SK-N-SH (cell line): ENCODE measurements at regions of chrX and their contacts with region 1.

Region 1: GRCh38 chrX:151151665-151152267 is 24.6 kb upstream of the GPR50 start:
- DNase-seq: peak; percentile 37
- H3K4me3 ChIP-seq: no peak overlapping the region
- H3K27ac ChIP-seq: no peak overlapping the region
- H3K4me1 ChIP-seq: no peaks in the 10 kb centered on the region
- H3K27me3 ChIP-seq: no peaks in the 10 kb centered on the region; the same call in 1 of the 2 replicates
- CTCF ChIP-seq: peak; percentile 88
- EP300 ChIP-seq: no peak
- RAD21 ChIP-seq: peak; percentile 89

Region 2: DNA sequence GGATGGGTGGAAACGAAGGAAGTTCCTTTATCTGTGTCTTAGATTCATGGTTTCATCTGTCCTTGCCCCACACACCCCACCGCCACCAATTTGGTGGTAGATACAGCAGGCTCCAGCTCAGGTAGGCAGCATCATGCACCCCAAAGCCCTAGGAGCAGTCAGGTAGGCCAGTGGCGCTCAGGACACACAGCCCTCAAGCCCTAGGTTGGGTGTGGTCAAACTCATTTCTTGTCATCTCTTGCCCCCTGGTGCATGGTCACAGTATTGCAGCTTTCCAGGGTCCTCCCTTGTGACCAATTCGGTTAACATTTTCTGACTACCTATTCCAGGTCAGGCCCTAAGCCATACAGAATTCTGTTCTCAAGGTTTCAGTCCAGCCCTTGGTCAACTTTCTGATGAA is 529.0 kb after region 1 on chrX:
- CTCF ChIA-PET with region 1: interaction called, 22 read pairs
- POLR2A ChIA-PET with region 1: no interaction called
- DNase-seq: peak; percentile 49
- H3K4me3 ChIP-seq: no peak overlapping the region
- H3K27ac ChIP-seq: no peak overlapping the region
- H3K4me1 ChIP-seq: no peaks in the 10 kb centered on the region
- H3K27me3 ChIP-seq: no peaks in the 10 kb centered on the region
- CTCF ChIP-seq: peak; percentile 70
- EP300 ChIP-seq: no peak
- RAD21 ChIP-seq: peak; percentile 82